Naive thymus-derived CD4-positive, alpha-beta T cell (primary cell): ENCODE measurements at regions of chr17 and their contacts with region 1.

Region 1: DNA sequence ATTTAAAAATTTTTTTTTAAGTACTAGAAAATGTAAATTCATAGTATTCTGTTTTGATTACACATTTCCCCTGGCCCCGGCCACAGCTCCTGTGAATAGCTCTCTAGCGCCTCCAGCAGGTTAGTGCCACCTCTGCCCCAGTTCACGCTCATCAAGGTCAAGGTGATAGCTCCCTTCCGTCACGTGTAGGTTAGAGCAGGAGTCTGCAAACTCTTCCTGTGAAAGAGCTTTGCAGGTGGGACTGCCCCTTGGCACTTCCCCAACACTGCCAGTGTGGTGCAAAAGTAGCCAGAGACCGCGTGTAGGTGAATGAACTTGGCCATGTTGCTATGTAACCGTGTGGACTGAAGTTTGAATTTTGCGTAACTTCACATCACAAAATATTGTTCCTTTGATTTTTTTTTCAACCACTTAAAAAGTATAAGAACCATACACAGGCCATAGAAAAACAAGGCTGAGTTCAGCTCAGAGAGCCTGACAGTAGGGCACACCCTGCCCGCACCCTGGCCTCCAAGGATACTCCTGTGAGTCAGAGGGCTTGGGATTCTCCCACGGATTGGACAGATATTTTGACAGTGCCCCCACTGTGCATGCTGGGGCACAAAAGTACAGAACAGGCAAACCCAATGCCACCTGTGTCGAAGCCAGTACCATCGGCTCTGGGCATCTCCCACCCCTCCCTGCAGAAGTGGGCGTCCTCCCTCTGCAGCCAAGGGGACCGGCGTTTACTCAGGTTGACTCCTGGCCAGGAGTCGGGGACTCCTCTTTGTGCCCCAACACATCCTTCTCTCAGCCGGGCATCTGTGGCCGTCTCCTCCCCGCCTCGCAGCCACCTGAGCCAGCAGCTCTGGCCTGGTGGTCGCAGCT is 92.0 kb upstream of the CHMP6 start:
- DNase-seq: peak; percentile 54 to 81 (median 76)
- ATAC-seq: peak; percentile 91
- H3K4me3 ChIP-seq: no peak overlapping the region
- H3K4me3 Mint-ChIP-seq: peak overlapping the region in 1 of 10 donors; percentile 25
- H3K27ac ChIP-seq: no peak overlapping the region
- H3K27ac Mint-ChIP-seq: peak overlapping the region in 4 of 9 donors; percentile 7 to 38 (median 26)
- H3K4me1 ChIP-seq: peaks cover 4 to 6% of the 10 kb centered on the region in 2 donors
- H3K4me1 Mint-ChIP-seq: peaks cover 5 to 63% (median 10%) of the 10 kb centered on the region in 7 donors
- H3K27me3 ChIP-seq: no peaks in the 10 kb centered on the region
- H3K27me3 Mint-ChIP-seq: no peaks in the 10 kb centered on the region

Region 2: DNA sequence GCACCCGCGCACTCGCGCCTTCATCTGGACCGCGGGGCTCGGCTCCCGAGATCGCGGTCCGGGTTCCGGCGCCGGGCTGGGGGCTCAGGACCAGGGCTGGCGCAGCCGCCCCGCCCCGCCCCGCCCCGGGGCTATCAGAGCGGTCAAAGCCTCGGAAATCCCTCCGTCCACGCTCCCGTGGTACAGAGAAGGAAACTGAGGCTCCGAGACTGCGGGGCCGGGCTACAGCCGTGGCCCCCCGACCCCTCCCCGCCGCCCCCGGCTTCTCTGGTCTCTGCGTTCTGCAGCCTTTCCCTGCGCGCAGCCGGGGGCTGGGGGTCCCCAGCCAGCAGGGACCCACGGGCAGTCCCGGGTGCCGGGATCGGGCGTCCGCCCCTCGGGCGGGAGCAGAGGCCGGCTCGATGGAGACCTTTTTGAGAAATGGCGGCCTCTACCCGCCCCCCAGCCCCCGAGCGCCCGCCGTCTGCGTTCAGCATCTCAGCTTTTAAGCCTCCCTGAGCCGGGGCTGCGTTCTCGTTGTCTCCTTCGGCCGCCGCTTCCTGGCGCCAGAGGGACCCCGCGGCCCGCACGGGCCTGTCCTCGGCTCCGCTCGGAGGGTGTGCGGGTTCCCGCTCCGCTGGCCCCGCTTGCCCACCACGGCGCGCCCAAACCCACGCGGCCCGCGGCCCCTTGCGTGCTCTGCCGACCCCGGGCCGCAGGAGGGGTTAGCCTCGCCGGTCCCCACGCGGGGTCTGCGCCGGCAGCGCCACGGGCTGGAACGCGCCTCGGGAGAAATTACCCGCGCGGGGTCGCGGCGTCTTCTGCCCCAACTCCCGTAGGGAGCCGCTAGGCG is 421.8 kb before region 1 on chr17:
- CTCF ChIA-PET with region 1: interaction called, 4 read pairs
- POLR2A ChIA-PET with region 1: no interaction called
- intact Hi-C with region 1: loop called (anchors 1 to 2 kb)
- DNase-seq: peak in 6 of 9 donors; percentile 29 to 58 (median 42)
- ATAC-seq: peak; percentile 31
- H3K4me3 ChIP-seq: no peak overlapping the region
- H3K4me3 Mint-ChIP-seq: peak overlapping the region in 1 of 10 donors; percentile 76
- H3K27ac ChIP-seq: no peak overlapping the region
- H3K27ac Mint-ChIP-seq: no peak overlapping the region
- H3K4me1 ChIP-seq: peaks cover 8 to 15% of the 10 kb centered on the region in 2 donors
- H3K4me1 Mint-ChIP-seq: peaks cover 8 to 24% (median 21%) of the 10 kb centered on the region in 7 donors
- H3K27me3 ChIP-seq: peaks cover 0 to 20% of the 10 kb centered on the region in 2 donors
- H3K27me3 Mint-ChIP-seq: peaks cover 46 to 58% (median 53%) of the 10 kb centered on the region in 5 donors

Region 3: GRCh38 chr17:80780381-80781198 is 119.0 kb before region 1 on chr17:
- CTCF ChIA-PET with region 1: interaction called, 3 read pairs
- POLR2A ChIA-PET with region 1: no interaction called
- intact Hi-C with region 1: loop called in 1 of 2 experiments (anchors 2 kb)
- DNase-seq: peak in 3 of 9 donors; percentile 29 to 57 (median 43)
- ATAC-seq: peak; percentile 40
- H3K4me3 ChIP-seq: peak overlapping the region; percentile 45
- H3K4me3 Mint-ChIP-seq: peak overlapping the region; percentile 62 to 96 (median 82)
- H3K27ac ChIP-seq: peak overlapping the region; percentile 70
- H3K27ac Mint-ChIP-seq: peak overlapping the region; percentile 87 to 99 (median 94)
- H3K4me1 ChIP-seq: peaks cover 38 to 57% of the 10 kb centered on the region in 2 donors
- H3K4me1 Mint-ChIP-seq: peaks cover 30 to 90% (median 77%) of the 10 kb centered on the region in 7 donors
- H3K27me3 ChIP-seq: no peaks in the 10 kb centered on the region
- H3K27me3 Mint-ChIP-seq: no peaks in the 10 kb centered on the region

Region 4: DNA sequence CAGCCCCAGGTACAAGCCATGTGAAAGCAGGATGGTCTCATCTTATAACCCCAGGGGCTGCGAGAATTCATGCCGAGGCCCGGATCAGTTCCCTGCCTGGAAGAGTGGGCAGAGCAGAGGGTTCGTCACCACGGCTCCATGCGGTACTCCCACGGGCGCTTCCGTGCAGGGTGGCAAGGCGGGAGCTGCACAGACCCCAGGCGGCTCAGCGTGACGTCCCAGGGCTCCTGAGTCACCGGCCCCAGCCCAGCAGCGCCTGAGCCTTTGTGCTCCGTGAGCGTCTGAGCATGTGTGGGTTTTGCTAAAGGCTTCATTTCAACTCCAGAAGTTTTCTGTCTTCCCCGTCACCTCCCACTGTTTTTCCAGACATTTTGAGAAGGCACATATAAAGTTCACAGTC is 20.8 kb after region 1 on chr17:
- CTCF ChIA-PET with region 1: interaction called, 3 read pairs
- POLR2A ChIA-PET with region 1: no interaction called
- intact Hi-C with region 1: loop called in 1 of 2 experiments (anchors 1 kb)
- DNase-seq: no peak
- ATAC-seq: no peak
- H3K4me3 ChIP-seq: no peak overlapping the region
- H3K4me3 Mint-ChIP-seq: no peak overlapping the region
- H3K27ac ChIP-seq: no peak overlapping the region
- H3K27ac Mint-ChIP-seq: peak overlapping the region in 1 of 9 donors; percentile 43
- H3K4me1 ChIP-seq: no peaks in the 10 kb centered on the region
- H3K4me1 Mint-ChIP-seq: peaks cover 0 to 1% (median 0%) of the 10 kb centered on the region in 7 donors
- H3K27me3 ChIP-seq: no peaks in the 10 kb centered on the region
- H3K27me3 Mint-ChIP-seq: no peaks in the 10 kb centered on the region

Region 5: DNA sequence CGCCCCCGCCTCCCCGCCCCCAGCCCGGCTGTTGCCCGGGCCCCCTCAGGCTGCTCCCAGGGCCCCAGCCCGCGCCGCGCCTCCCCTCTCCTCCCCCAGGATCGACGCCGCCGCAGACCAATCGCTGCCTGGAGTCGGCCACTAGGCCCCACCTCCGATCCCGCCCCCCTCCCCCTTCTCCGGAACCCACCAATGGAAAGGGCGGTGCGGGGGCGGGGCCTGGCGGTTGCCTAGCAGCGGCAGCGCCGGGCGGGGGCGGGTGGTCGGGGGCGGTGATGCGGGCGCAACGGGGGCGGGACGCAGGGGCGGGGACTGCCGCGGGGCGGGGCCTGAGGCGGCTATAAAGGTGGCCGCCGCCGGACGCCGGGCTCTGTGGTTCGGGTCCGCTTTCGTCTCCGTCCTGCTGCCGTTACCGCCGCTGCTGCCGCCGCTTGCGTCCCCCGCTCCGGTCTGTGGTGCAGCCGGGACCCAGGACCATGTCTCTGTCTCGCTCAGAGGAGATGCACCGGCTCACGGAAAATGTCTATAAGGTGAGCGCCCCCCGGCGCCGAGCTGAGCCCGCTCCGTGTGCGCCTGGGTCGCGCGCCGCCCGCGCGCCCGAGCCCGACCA is 135.2 kb after region 1 on chr17 and contains the start of gene BAIAP2:
- CTCF ChIA-PET with region 1: no interaction called
- POLR2A ChIA-PET with region 1: no interaction called
- intact Hi-C with region 1: no loop called
- DNase-seq: peak; percentile 88 to 95 (median 94)
- ATAC-seq: peak; percentile 94
- H3K4me3 ChIP-seq: peak within 1 kb of the TSS; percentile 53
- H3K4me3 Mint-ChIP-seq: peak within 1 kb of the TSS; percentile 87 to 96 (median 92)
- H3K27ac ChIP-seq: peak within 1 kb of the TSS; percentile 67
- H3K27ac Mint-ChIP-seq: peak within 1 kb of the TSS in 8 of 9 donors; percentile 49 to 93 (median 87)
- H3K4me1 ChIP-seq: peaks cover 0 to 9% of the 10 kb centered on the region in 2 donors
- H3K4me1 Mint-ChIP-seq: peaks cover 5 to 27% (median 19%) of the 10 kb centered on the region in 7 donors
- H3K27me3 ChIP-seq: no peaks in the 10 kb centered on the region
- H3K27me3 Mint-ChIP-seq: peaks cover 0 to 50% (median 0%) of the 10 kb centered on the region in 5 donors
- total RNA-seq, gene BAIAP2: 7.3 to 13.7 (median 12.3) TPM

Region 6: GRCh38 chr17:81135503-81136278 is 236.1 kb after region 1 on chr17:
- CTCF ChIA-PET with region 1: no interaction called
- POLR2A ChIA-PET with region 1: no interaction called
- intact Hi-C with region 1: no loop called
- DNase-seq: no peak
- ATAC-seq: no peak
- H3K4me3 ChIP-seq: no peak overlapping the region
- H3K4me3 Mint-ChIP-seq: peak overlapping the region in 1 of 10 donors; percentile 8
- H3K27ac ChIP-seq: no peak overlapping the region
- H3K27ac Mint-ChIP-seq: no peak overlapping the region
- H3K4me1 ChIP-seq: no peaks in the 10 kb centered on the region
- H3K4me1 Mint-ChIP-seq: no peaks in the 10 kb centered on the region
- H3K27me3 ChIP-seq: no peaks in the 10 kb centered on the region
- H3K27me3 Mint-ChIP-seq: no peaks in the 10 kb centered on the region